HEK293 (cell line): ENCODE measurements at regions of chr12 and their contacts with region 1.

Region 1: GRCh38 chr12:124852911-124853427 is 10.7 kb downstream of the SCARB1 start:
- H3K4me3 ChIP-seq: no peak overlapping the region
- H3K27ac ChIP-seq: no peak overlapping the region
- H3K4me1 ChIP-seq: no peaks in the 10 kb centered on the region
- CTCF ChIP-seq: no peak

Region 2: DNA sequence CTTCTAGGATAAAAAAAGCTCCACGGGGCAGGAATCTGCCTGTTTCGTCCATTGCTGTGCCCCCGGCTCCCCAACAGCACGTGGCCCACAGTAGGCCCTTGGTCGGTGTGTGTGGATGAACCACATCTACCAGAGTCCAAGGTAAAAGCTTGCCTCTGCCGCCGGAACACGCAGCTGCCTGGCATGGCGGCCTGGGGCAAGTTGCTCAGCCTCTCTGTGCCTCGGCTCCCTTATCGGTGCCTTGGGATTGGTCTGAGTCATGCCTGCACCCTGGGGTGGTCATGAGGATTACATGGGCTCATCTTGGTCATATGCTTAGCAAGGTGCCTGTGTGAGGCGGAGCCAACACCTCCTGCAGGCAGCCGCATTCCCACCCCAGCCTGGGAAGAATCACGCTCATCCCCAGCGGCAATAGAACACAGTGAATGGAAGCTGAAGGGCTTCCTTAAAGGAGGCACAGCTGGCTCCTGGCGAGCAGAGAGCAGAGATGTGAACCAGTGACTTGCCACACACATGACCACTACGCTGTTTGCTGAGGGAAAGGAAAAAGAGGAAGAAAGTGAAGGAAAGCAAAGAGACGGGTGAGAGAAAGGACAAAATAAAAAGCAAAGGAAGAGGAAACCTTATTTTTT is 16.2 kb after region 1 on chr12:
- CTCF ChIA-PET with region 1: no interaction called
- POLR2A ChIA-PET with region 1: no interaction called
- H3K4me3 ChIP-seq: no peak overlapping the region
- H3K27ac ChIP-seq: no peak overlapping the region
- H3K4me1 ChIP-seq: no peaks in the 10 kb centered on the region; the same call in 1 of the 2 replicates
- CTCF ChIP-seq: no peak

Region 3: DNA sequence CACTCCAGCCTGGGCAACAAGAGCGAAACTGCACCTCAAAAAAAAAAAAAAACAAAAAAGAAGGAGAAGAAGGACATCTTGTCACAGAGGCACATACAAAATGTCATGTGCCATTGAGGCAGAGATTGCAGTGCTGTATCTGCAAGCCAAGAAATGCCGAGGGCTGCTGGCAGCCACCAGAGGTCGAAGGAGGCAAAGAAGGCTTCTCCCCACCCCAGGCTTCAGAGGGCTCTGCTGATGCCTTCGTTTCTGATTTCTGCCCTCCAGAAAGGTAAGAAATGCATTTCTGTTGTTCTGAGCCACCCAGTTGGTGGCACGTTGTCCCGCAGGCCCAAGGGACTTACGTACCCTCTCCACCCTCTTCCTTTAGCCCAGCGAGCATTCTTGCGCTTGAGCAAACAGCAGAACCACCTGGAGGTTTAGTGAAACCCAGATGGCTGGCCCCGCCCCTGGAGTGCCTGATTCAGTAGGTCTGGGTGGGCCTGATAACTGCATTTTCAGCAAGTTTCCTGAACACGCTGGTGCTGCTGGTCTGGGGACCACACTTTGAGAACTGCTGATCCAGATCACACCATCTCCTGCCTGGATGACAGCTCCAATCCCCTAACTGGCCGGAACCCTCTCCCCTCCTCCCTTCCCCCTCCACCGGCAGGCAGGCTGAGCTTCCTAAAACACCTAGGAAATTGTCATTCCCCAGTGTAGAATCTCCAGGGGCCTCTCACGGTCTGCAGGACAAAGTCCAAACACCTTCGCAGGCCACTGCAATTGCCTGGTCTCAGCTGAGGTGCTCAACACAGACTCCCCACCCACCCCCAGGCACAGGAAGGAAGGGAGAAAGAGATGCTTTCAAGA is 31.8 kb after region 1 on chr12:
- CTCF ChIA-PET with region 1: no interaction called
- POLR2A ChIA-PET with region 1: interaction called, 10 read pairs
- H3K4me3 ChIP-seq: no peak overlapping the region
- H3K27ac ChIP-seq: no peak overlapping the region
- H3K4me1 ChIP-seq: no peaks in the 10 kb centered on the region
- CTCF ChIP-seq: no peak